ENCODE measurements at regions of chr19 and their contacts with region 1.

Region 1: DNA sequence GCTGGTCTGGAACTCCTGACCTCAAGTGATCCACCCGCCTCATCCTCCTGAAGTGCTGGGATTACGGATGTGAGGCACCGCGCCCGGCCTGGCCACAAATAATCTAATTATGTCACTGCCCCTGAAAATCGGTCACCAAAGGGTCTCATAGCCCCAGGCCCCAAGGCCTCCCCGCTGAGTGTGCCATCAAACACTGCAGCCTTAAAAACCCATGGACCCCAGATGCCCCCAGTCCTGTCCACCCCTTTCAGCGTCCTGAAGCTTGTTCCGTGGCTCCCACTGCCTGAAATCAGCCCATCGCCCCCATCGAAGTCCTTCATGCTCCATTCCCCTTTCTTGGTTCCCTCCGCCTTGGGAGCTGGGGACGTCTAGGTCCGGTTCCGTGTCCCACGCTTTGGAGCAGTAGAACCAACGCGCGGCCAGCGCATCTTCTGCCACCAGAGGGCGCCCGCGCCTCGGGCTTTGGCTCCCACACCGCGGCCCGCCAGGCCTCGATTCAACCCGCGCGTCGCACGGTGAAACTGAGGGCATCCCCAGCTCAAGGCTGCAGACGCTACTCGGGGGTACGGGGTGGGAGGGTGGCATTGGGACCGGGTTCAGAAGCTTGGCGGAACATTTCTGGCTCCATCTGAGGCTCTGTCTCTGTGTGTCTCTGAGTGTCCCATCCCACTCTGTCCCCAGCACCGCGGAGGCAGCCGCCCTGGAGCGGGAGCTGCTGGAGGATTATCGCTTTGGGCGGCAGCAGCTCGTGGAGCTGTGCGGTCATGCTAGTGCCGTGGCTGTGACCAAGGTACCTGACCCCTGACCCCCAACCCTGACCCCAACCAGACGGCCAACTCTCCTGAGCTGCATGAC is 3.5 kb downstream of the YJEFN3 start:
- DNase-seq: peak in 1 of 2 experiments; percentile 97
- H3K4me3 ChIP-seq: no peak overlapping the region
- H3K27ac ChIP-seq: no peak overlapping the region
- H3K4me1 ChIP-seq: peaks cover 0 to 3% (median 3%) of the 10 kb centered on the region in 4 experiments; a peak in 3 of 7 replicates
- H3K27me3 ChIP-seq: no peaks in the 10 kb centered on the region; a peak in 1 of 7 replicates
- CTCF ChIP-seq: peak; percentile 94 to 96 (median 96)
- EP300 ChIP-seq: no peak
- POLR2A ChIP-seq: 0 out of 3 replicates have a peak, but pooled peaks of 1 of the 2 experiments have one; percentile 21
- RAD21 ChIP-seq: peak; percentile 89 to 95

Region 2: DNA sequence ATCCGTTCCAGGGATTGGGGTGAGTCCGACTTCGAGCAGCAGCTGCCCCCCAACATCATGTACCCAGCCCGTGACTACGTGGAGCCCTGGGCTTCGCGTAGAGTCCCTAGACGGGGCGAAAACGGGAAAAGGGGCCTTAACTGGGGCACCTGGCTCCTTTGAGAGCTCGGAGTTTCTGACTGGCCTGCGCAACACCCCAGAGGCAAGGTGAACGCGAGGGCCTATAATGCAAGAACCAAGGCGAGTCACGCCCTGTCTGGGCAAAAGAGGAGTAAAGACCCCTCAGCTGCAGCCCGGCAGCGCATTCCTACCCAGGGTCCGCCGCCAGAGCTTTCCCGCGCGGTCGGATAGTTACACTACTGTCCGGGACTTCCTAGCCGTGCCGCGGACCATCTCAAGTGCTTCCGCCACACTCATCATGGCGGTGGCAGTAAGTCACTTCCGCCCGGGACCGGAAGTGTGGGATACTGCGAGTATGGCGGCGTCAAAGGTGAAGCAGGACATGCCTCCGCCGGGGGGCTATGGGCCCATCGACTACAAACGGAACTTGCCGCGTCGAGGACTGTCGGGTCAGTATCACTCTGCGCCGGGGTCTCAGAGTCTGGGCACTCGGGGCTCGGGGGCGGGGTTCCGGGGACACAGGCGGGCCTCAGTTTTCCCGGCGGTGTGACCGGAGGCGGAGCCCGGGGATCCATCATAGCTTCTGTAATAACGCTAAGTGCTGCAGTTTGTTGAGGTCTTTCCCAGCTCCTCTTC is 16.2 kb before region 1 on chr19 and contains the start of gene NDUFA13:
- CTCF ChIA-PET with region 1: interaction called, 10 read pairs
- POLR2A ChIA-PET with region 1: interaction called, 34 read pairs
- DNase-seq: peak; percentile 70 to 98
- H3K4me3 ChIP-seq: peak within 1 kb of the TSS; percentile 68 to 87 (median 85)
- H3K27ac ChIP-seq: peak within 1 kb of the TSS; percentile 57; the same call in 1 of the 2 replicates
- H3K4me1 ChIP-seq: peaks cover 0 to 2% (median 0%) of the 10 kb centered on the region in 4 experiments; a peak in 1 of 7 replicates
- H3K27me3 ChIP-seq: no peaks in the 10 kb centered on the region; a peak in 1 of 7 replicates
- CTCF ChIP-seq: no peak; a peak in 1 of 4 replicates
- EP300 ChIP-seq: no peak
- POLR2A ChIP-seq: peak; percentile 84 to 86
- RAD21 ChIP-seq: no peak
- total RNA-seq, gene NDUFA13: 413 and 425 TPM in 2 replicates

Region 3: GRCh38 chr19:19562665-19563347 is 30.6 kb after region 1 on chr19:
- CTCF ChIA-PET with region 1: interaction called, 17 read pairs
- POLR2A ChIA-PET with region 1: interaction called, 3 read pairs
- DNase-seq: peak in 1 of 2 experiments; percentile 53
- H3K4me3 ChIP-seq: no peak overlapping the region
- H3K27ac ChIP-seq: no peak overlapping the region
- H3K4me1 ChIP-seq: peaks cover 0 to 4% (median 0%) of the 10 kb centered on the region in 4 experiments; a peak in 2 of 7 replicates
- H3K27me3 ChIP-seq: no peaks in the 10 kb centered on the region
- CTCF ChIP-seq: peak; percentile 48 to 68 (median 62); a peak in 3 of 4 replicates
- EP300 ChIP-seq: no peak
- POLR2A ChIP-seq: no peak
- RAD21 ChIP-seq: peak; percentile 57 to 67

Region 4: GRCh38 chr19:19627621-19628500 is 95.7 kb after region 1 on chr19 and contains the start of gene LPAR2:
- CTCF ChIA-PET with region 1: interaction called, 4 read pairs
- POLR2A ChIA-PET with region 1: interaction called, 17 read pairs
- DNase-seq: peak in 1 of 2 experiments; percentile 89
- H3K4me3 ChIP-seq: peak within 1 kb of the TSS; percentile 69 to 82 (median 74)
- H3K27ac ChIP-seq: peak within 1 kb of the TSS; percentile 72; the same call in 1 of the 2 replicates
- H3K4me1 ChIP-seq: peaks cover 0 to 11% (median 8%) of the 10 kb centered on the region in 4 experiments; a peak in 5 of 7 replicates
- H3K27me3 ChIP-seq: no peaks in the 10 kb centered on the region
- CTCF ChIP-seq: no peak
- EP300 ChIP-seq: no peak
- POLR2A ChIP-seq: peak; percentile 66 to 90
- RAD21 ChIP-seq: no peak
- total RNA-seq, gene LPAR2: 47.1 and 47.6 TPM in 2 replicates

Region 5: GRCh38 chr19:19643158-19644053 is 111.2 kb after region 1 on chr19 and contains the start of gene GMIP:
- CTCF ChIA-PET with region 1: interaction called, 25 read pairs
- POLR2A ChIA-PET with region 1: interaction called, 12 read pairs
- DNase-seq: peak in 1 of 2 experiments; percentile 99
- H3K4me3 ChIP-seq: peak within 1 kb of the TSS; percentile 77 to 85 (median 80)
- H3K27ac ChIP-seq: peak within 1 kb of the TSS; percentile 78
- H3K4me1 ChIP-seq: peaks cover 0 to 3% (median 2%) of the 10 kb centered on the region in 4 experiments; a peak in 2 of 7 replicates
- H3K27me3 ChIP-seq: no peaks in the 10 kb centered on the region
- CTCF ChIP-seq: peak; percentile 74 to 94 (median 87)
- EP300 ChIP-seq: no peak
- POLR2A ChIP-seq: peak in 1 of 2 experiments; percentile 76; a peak in 1 of 3 replicates
- RAD21 ChIP-seq: peak; percentile 85 to 94
- total RNA-seq, gene GMIP: 18.1 and 20.2 TPM in 2 replicates